ENCODE measurements at regions of chr9 and their contacts with region 1.

Region 1: GRCh38 chr9:123091459-123091858 is 58.0 kb downstream of the GPR21 start:
- DNase-seq: no peak
- ATAC-seq: no peak
- H3K4me3 Mint-ChIP-seq: no peak overlapping the region
- H3K27ac Mint-ChIP-seq: no peak overlapping the region
- H3K4me1 Mint-ChIP-seq: no peaks in the 10 kb centered on the region
- H3K27me3 Mint-ChIP-seq: no peaks in the 10 kb centered on the region

Region 2: DNA sequence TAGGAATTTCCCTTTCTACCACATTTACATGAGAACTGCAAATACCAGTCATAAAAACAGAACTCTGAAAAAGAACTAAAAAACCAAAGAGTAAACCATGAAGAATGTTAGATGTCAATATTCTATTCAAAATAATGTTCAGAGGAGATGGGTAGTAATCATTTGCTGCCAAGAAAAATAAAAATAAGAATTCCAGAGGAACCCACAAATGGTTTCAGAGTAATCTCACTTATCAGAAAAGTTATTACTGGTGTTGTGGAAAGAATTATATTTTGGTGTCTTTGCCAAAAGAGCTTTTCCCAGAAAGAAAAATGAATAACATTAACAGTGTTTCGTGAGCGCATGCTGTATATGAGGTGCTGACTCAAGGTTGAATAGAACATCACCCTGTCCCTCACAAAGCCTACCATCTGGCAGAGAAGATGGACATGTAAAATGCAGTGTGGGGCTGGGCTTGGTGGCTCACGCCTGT is 22.4 kb before region 1 on chr9:
- CTCF ChIA-PET with region 1: no interaction called
- POLR2A ChIA-PET with region 1: no interaction called
- DNase-seq: no peak
- ATAC-seq: no peak
- H3K4me3 Mint-ChIP-seq: no peak overlapping the region
- H3K27ac Mint-ChIP-seq: no peak overlapping the region
- H3K4me1 Mint-ChIP-seq: no peaks in the 10 kb centered on the region
- H3K27me3 Mint-ChIP-seq: no peaks in the 10 kb centered on the region

Region 3: GRCh38 chr9:123211081-123211480 is 119.6 kb after region 1 on chr9:
- CTCF ChIA-PET with region 1: no interaction called
- POLR2A ChIA-PET with region 1: no interaction called
- DNase-seq: no peak
- ATAC-seq: no peak
- H3K4me3 Mint-ChIP-seq: no peak overlapping the region
- H3K27ac Mint-ChIP-seq: no peak overlapping the region
- H3K4me1 Mint-ChIP-seq: no peaks in the 10 kb centered on the region
- H3K27me3 Mint-ChIP-seq: no peaks in the 10 kb centered on the region

Region 4: GRCh38 chr9:123225374-123225813 is 133.9 kb after region 1 on chr9:
- CTCF ChIA-PET with region 1: interaction called, 14 read pairs
- POLR2A ChIA-PET with region 1: no interaction called
- DNase-seq: peak; percentile 54
- ATAC-seq: peak; percentile 92
- H3K4me3 Mint-ChIP-seq: no peak overlapping the region
- H3K27ac Mint-ChIP-seq: no peak overlapping the region
- H3K4me1 Mint-ChIP-seq: peaks cover 13% of the 10 kb centered on the region
- H3K27me3 Mint-ChIP-seq: no peaks in the 10 kb centered on the region

Measured in activated CD8-positive, alpha-beta T cell treated with anti-CD3 and anti-CD28 coated beads, Interleukin-2, amount 10 ng/mL, durations not matched to agents 7 days and 5 days (primary cell).